Right ventricle myocardium inferior (tissue), 1 donor: ENCODE measurements at regions of chr3 and their contacts with region 1.

Region 1: GRCh38 chr3:129627429-129628168 is 21.1 kb upstream of the PLXND1 start:
- DNase-seq: peak; percentile 83
- ATAC-seq: peak; percentile 42

Region 2: GRCh38 chr3:129439817-129440617 is 187.6 kb before region 1 on chr3 and contains the starts of genes IFT122 and MBD4:
- intact Hi-C with region 1: loop called (anchors 5 kb)
- DNase-seq: peak; percentile 99
- ATAC-seq: peak; percentile 95
- total RNA-seq, gene IFT122: 19.7 TPM
- total RNA-seq, gene MBD4: 20.2 TPM

Region 3: GRCh38 chr3:129560901-129561594 is 66.6 kb before region 1 on chr3:
- intact Hi-C with region 1: loop called (anchors 2 kb)
- DNase-seq: peak; percentile 90
- ATAC-seq: peak; percentile 86

Region 4: GRCh38 chr3:129606636-129607390 is 20.8 kb before region 1 on chr3 and contains the start of gene PLXND1:
- intact Hi-C with region 1: loop called (anchors 2 kb)
- DNase-seq: peak; percentile 90
- ATAC-seq: peak; percentile 79
- total RNA-seq, gene PLXND1: 66.3 TPM

Region 5: GRCh38 chr3:129934234-129935123 is 306.9 kb after region 1 on chr3:
- intact Hi-C with region 1: loop called (anchors 2 kb)
- DNase-seq: no peak
- ATAC-seq: no peak